ENCODE measurements at regions of chr18 and their contacts with region 1.

Region 1: GRCh38 chr18:36809590-36810381 is 19.0 kb downstream of the TPGS2 start:
- DNase-seq: peak; percentile 17 to 28
- ATAC-seq: peak; percentile 92 to 99
- H3K4me3 ChIP-seq: no peak overlapping the region
- H3K27ac ChIP-seq: no peak overlapping the region
- H3K4me1 ChIP-seq: no peaks in the 10 kb centered on the region
- H3K27me3 ChIP-seq: no peaks in the 10 kb centered on the region
- CTCF ChIP-seq: peak; percentile 69 to 82 (median 76)
- POLR2A ChIP-seq: no peak

Region 2: DNA sequence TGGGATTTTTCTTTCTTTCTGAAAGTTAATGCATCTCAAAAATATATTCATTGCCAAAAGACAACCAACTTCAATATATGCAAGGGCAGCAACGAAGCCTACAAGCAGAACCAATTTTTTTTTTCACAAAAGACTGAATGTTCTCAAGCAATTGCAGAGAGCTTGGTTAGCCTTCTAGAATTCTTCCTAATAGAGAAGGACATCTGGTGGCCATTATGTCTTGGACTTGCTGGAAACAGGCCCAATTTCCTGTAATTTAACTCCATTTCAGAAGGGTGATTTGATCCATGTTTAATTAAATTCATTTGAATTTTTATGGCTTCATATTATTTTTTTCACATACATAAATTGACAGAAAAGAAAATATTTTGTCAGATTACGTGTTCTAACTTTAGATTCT is 189.0 kb before region 1 on chr18:
- in situ Hi-C with region 1: no loop called
- intact Hi-C with region 1: no loop called
- DNase-seq: no peak
- ATAC-seq: no peak
- H3K4me3 ChIP-seq: no peak overlapping the region
- H3K27ac ChIP-seq: no peak overlapping the region
- H3K4me1 ChIP-seq: no peaks in the 10 kb centered on the region
- H3K27me3 ChIP-seq: no peaks in the 10 kb centered on the region
- CTCF ChIP-seq: no peak
- POLR2A ChIP-seq: no peak

Region 3: GRCh38 chr18:36688020-36688965 is 121.5 kb before region 1 on chr18:
- in situ Hi-C with region 1: loop called in 1 of 4 experiments (anchors 10 kb)
- intact Hi-C with region 1: loop called (anchors 2 kb)
- DNase-seq: peak in 1 of 2 donors; percentile 52
- ATAC-seq: peak; percentile 73 to 80
- H3K4me3 ChIP-seq: no peak overlapping the region
- H3K27ac ChIP-seq: no peak overlapping the region
- H3K4me1 ChIP-seq: no peaks in the 10 kb centered on the region
- H3K27me3 ChIP-seq: no peaks in the 10 kb centered on the region
- CTCF ChIP-seq: peak; percentile 70 to 86 (median 83)
- POLR2A ChIP-seq: no peak

Region 4: GRCh38 chr18:36769611-36770314 is 40.0 kb before region 1 on chr18:
- in situ Hi-C with region 1: loop called in 1 of 4 experiments (anchors 5 kb)
- intact Hi-C with region 1: loop called (anchors 1 kb)
- DNase-seq: peak in 1 of 2 donors; percentile 37
- ATAC-seq: peak; percentile 42 to 64
- H3K4me3 ChIP-seq: no peak overlapping the region
- H3K27ac ChIP-seq: no peak overlapping the region
- H3K4me1 ChIP-seq: no peaks in the 10 kb centered on the region
- H3K27me3 ChIP-seq: no peaks in the 10 kb centered on the region
- CTCF ChIP-seq: peak; percentile 38 to 64 (median 54)
- POLR2A ChIP-seq: no peak

Region 5: DNA sequence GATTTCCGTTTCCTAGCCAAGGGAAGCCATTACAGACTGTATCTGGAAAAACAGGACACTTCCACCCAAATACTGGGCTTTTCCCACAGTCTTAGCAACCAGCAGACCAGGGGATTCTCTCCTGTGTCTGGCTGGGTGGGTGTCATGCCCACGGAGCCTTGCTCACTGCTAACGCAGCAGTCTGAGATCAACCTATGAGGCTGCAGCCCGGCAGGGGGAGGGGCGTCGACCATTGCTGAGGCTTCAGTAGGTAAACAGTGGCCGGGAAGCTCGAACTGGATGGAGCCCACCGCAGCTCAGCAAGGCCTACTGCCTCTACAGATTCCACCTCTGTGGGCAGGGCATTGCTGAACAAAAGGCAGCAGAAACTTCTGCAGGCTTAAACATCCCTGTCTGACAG is 150.3 kb after region 1 on chr18:
- in situ Hi-C with region 1: no loop called
- intact Hi-C with region 1: no loop called
- DNase-seq: no peak
- ATAC-seq: no peak
- H3K4me3 ChIP-seq: no peak overlapping the region
- H3K27ac ChIP-seq: no peak overlapping the region
- H3K4me1 ChIP-seq: no peaks in the 10 kb centered on the region
- H3K27me3 ChIP-seq: no peaks in the 10 kb centered on the region
- CTCF ChIP-seq: no peak
- POLR2A ChIP-seq: no peak

Measured in gastrocnemius medialis (tissue), 4 donors.